Gastrocnemius medialis (tissue), 4 donors: ENCODE measurements at regions of chr19 and their contacts with region 1.

Region 1: DNA sequence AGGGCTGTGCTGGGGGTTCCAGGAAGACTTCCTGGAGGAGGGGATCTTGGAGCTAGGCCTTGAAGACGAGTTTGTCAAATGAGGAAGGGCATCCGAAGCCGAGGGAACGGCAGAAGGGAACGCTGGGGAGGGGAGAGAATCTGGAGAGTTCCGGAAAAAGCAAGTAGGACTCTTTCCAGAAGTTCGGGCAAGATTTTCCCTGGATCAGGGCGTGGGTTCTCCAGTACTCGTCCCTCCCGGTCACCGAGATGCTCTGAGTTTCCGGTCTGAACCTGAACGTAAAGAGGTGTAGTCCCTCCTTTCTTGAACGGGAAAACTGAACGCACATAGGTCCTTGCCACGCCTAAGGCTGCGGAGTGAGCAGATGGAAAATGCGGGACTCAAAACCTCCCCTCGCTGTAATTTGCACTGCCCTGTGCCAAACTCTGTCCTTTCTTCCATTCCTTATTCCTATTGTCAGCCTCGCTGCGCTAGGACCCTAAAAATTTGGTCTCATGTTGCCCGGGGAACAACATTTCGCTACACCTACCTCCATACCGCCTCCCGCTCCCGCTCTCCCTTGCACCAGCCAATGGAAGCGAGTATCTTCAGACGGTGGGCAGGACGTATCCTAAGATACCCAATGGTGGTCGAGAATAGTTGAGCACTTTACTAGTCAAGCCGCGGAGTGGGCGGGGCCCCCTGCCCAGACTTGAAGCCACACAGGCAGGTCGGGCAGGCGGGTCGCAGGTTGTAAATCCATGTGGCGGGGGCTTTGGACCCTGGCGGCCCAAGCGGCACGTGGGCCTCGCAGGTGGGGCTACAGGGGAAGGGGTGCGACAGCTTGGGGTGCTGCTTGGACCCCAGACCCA is at the start of gene GTPBP3:
- DNase-seq: peak; percentile 94 to 97
- ATAC-seq: peak; percentile 94 to 96
- H3K4me3 ChIP-seq: peak within 1 kb of the TSS; percentile 79 to 100 (median 90)
- H3K27ac ChIP-seq: peak within 1 kb of the TSS; percentile 82 to 93 (median 92)
- H3K4me1 ChIP-seq: peaks cover 22 to 24% of the 10 kb centered on the region in 2 donors
- H3K27me3 ChIP-seq: no peaks in the 10 kb centered on the region
- CTCF ChIP-seq: no peak
- POLR2A ChIP-seq: peak in 1 of 2 donors; percentile 26
- total RNA-seq, gene GTPBP3: 6.7 to 21.3 (median 11.1) TPM

Region 2: GRCh38 chr19:17215125-17215971 is 121.7 kb before region 1 on chr19 and contains the start of gene USE1:
- in situ Hi-C with region 1: no loop called
- intact Hi-C with region 1: loop called (anchors 2 kb)
- DNase-seq: peak; percentile 86 to 89
- ATAC-seq: peak; percentile 98 to 99
- H3K4me3 ChIP-seq: peak within 1 kb of the TSS; percentile 81 to 88 (median 84)
- H3K27ac ChIP-seq: peak within 1 kb of the TSS; percentile 85 to 91 (median 89)
- H3K4me1 ChIP-seq: peaks cover 9 to 14% of the 10 kb centered on the region in 2 donors
- H3K27me3 ChIP-seq: no peaks in the 10 kb centered on the region
- CTCF ChIP-seq: no peak
- POLR2A ChIP-seq: peak in 1 of 2 donors; percentile 31
- total RNA-seq, gene USE1: 14.1 to 39.9 (median 22.3) TPM

Region 3: GRCh38 chr19:17235618-17236377 is 101.3 kb before region 1 on chr19:
- in situ Hi-C with region 1: no loop called
- intact Hi-C with region 1: no loop called
- DNase-seq: peak in 1 of 2 donors; percentile 62
- ATAC-seq: peak; percentile 84 to 86
- H3K4me3 ChIP-seq: peak overlapping the region; percentile 45 to 65 (median 50)
- H3K27ac ChIP-seq: peak overlapping the region; percentile 50 to 78 (median 70)
- H3K4me1 ChIP-seq: peaks cover 9 to 18% of the 10 kb centered on the region in 2 donors
- H3K27me3 ChIP-seq: no peaks in the 10 kb centered on the region
- CTCF ChIP-seq: peak in 4 of 5 experiments; percentile 27 to 67 (median 52)
- POLR2A ChIP-seq: no peak

Region 4: GRCh38 chr19:17266975-17267788 is 69.9 kb before region 1 on chr19 and contains the start of gene BABAM1:
- in situ Hi-C with region 1: no loop called
- intact Hi-C with region 1: loop called (anchors 2 kb)
- DNase-seq: peak; percentile 97
- ATAC-seq: peak; percentile 98 to 99
- H3K4me3 ChIP-seq: peak within 1 kb of the TSS; percentile 83 to 92 (median 89)
- H3K27ac ChIP-seq: peak within 1 kb of the TSS; percentile 77 to 91 (median 86)
- H3K4me1 ChIP-seq: peaks cover 8 to 10% of the 10 kb centered on the region in 2 donors
- H3K27me3 ChIP-seq: no peaks in the 10 kb centered on the region
- CTCF ChIP-seq: no peak
- POLR2A ChIP-seq: peak; percentile 17 to 61
- total RNA-seq, gene BABAM1: 86.3 to 120 (median 99.4) TPM

Region 5: GRCh38 chr19:17305517-17306284 is 31.4 kb before region 1 on chr19 and contains the start of gene MRPL34:
- in situ Hi-C with region 1: no loop called
- intact Hi-C with region 1: loop called (anchors 1 kb)
- DNase-seq: peak; percentile 94 to 98
- ATAC-seq: peak; percentile 69 to 72
- H3K4me3 ChIP-seq: peak within 1 kb of the TSS; percentile 64 to 83 (median 72)
- H3K27ac ChIP-seq: peak within 1 kb of the TSS; percentile 92 to 94 (median 94)
- H3K4me1 ChIP-seq: peaks cover 44 to 52% of the 10 kb centered on the region in 2 donors
- H3K27me3 ChIP-seq: no peaks in the 10 kb centered on the region
- CTCF ChIP-seq: peak; percentile 74 to 86 (median 82)
- POLR2A ChIP-seq: peak; percentile 69 to 75
- total RNA-seq, gene MRPL34: 145 to 369 (median 249) TPM

Region 6: DNA sequence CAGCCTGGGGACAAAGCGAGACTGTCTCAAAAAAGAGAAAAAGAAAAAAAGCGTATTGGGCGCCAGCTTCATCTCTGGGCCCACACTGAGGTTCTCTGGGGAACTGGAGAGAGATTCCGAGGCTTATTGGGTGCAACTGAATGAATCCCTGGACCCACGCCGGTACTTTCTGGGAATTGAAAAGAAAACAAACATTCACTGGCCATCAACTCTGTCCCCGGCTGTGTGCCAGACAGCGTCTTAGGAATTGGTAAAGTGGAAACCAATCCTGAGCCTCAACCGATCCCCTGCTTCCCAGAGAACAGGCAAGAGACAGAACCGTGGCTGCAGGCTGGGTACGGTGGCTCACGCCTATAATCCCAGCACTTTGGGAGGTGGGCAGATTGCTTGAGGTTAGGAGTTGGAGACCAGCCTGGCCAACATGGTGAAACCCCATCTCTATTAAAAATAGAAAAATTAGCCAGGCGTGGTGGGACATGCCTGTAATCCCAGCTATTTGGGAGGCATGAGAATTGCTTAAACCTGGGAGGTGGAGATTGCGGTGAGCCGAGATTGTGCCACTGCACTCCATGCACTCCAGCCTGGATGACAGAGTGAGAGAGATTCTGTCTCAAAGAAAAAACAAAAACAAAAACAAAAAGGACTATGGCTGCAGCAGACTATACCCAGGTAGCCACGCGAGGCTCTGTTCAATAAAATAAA is 11.0 kb before region 1 on chr19:
- in situ Hi-C with region 1: no loop called
- intact Hi-C with region 1: no loop called
- DNase-seq: no peak
- ATAC-seq: no peak
- H3K4me3 ChIP-seq: no peak overlapping the region
- H3K27ac ChIP-seq: no peak overlapping the region
- H3K4me1 ChIP-seq: no peaks in the 10 kb centered on the region
- H3K27me3 ChIP-seq: no peaks in the 10 kb centered on the region
- CTCF ChIP-seq: no peak
- POLR2A ChIP-seq: no peak

Region 7: DNA sequence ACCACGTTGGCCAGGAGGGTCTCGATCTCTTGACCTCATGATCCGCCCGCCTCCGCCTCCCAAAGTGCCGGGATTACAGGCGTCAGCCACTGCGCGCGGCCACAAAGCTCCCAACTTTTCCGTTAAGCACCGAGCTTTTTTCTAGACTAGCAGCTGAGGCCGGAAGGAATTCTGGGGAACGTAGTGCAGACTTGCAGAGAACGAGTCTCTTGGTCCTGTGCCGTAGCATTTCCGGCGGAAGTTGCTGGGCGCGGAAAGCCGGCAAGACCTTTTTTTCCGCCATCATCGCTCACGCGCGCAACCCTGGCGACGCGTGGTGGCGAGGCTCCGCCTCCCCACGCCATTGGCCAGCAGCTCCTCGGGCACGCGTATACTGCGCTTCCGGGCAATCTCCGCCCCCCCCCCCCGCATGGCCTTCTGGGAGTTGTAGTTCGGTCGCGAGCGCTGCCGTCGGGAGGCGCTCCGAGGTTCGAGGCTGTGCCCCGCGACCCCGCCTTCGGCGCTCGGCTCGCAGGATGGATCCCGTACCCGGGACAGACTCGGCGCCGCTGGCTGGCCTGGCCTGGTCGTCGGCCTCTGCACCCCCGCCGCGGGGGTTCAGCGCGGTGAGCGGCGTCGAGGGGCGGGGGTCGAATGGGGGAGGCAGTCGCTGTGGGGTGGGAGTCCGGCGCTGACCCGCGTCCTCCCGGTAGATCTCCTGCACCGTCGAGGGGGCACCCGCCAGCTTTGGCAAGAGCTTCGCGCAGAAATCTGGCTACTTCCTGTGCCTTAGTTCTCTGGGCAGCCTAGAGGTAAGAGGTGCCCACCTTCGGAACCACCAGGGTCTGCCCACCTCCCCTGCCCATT is 82.7 kb after region 1 on chr19 and contains the start of gene MVB12A:
- in situ Hi-C with region 1: no loop called
- intact Hi-C with region 1: loop called (anchors 1 kb)
- DNase-seq: peak; percentile 95 to 97
- ATAC-seq: peak; percentile 99 to 100
- H3K4me3 ChIP-seq: peak within 1 kb of the TSS; percentile 73 to 99 (median 86)
- H3K27ac ChIP-seq: peak within 1 kb of the TSS; percentile 71 to 85 (median 82)
- H3K4me1 ChIP-seq: peaks cover 11% of the 10 kb centered on the region in 2 donors
- H3K27me3 ChIP-seq: peaks cover 0 to under 1% (median under 1%) of the 10 kb centered on the region in 3 donors
- CTCF ChIP-seq: peak in 1 of 5 experiments; percentile 7
- POLR2A ChIP-seq: peak in 1 of 2 donors; percentile 45
- total RNA-seq, gene MVB12A: 35.8 to 62.7 (median 52.3) TPM

Region 8: GRCh38 chr19:17511724-17512573 is 174.9 kb after region 1 on chr19:
- in situ Hi-C with region 1: no loop called
- intact Hi-C with region 1: loop called (anchors 5 kb)
- DNase-seq: peak; percentile 80 to 86
- ATAC-seq: peak; percentile 68 to 72
- H3K4me3 ChIP-seq: peak overlapping the region; percentile 75 to 100 (median 84)
- H3K27ac ChIP-seq: peak overlapping the region; percentile 90 to 100 (median 96)
- H3K4me1 ChIP-seq: peaks cover 22 to 27% of the 10 kb centered on the region in 2 donors
- H3K27me3 ChIP-seq: no peaks in the 10 kb centered on the region
- CTCF ChIP-seq: peak in 3 of 5 experiments; percentile 33 to 78 (median 72)
- POLR2A ChIP-seq: peak; percentile 76 to 82

Region 9: GRCh38 chr19:17555480-17555928 is 218.4 kb after region 1 on chr19 and contains the start of gene COLGALT1:
- in situ Hi-C with region 1: no loop called
- intact Hi-C with region 1: loop called (anchors 10 kb)
- DNase-seq: peak; percentile 97 to 98
- ATAC-seq: peak; percentile 95
- H3K4me3 ChIP-seq: peak within 1 kb of the TSS; percentile 62 to 100 (median 87)
- H3K27ac ChIP-seq: peak within 1 kb of the TSS; percentile 72 to 86 (median 85)
- H3K4me1 ChIP-seq: peaks cover 13 to 25% of the 10 kb centered on the region in 2 donors
- H3K27me3 ChIP-seq: no peaks in the 10 kb centered on the region
- CTCF ChIP-seq: peak in 1 of 5 experiments; percentile 19
- POLR2A ChIP-seq: peak; percentile 62 to 72
- total RNA-seq, gene COLGALT1: 16.6 to 33.2 (median 27.5) TPM